CD4-positive, alpha-beta T cell (primary cell): ENCODE measurements at regions of chr17 and their contacts with region 1.

Region 1: GRCh38 chr17:56715613-56716357 is 117.9 kb downstream of the C17orf67 start:
- DNase-seq: peak; percentile 60 to 87 (median 66)
- ATAC-seq: peak; percentile 93
- H3K4me3 ChIP-seq: no peak overlapping the region
- H3K4me3 Mint-ChIP-seq: no peak overlapping the region
- H3K27ac ChIP-seq: no peak overlapping the region
- H3K27ac Mint-ChIP-seq: no peak overlapping the region
- H3K4me1 ChIP-seq: peaks cover 8% of the 10 kb centered on the region
- H3K4me1 Mint-ChIP-seq: peaks cover 8% of the 10 kb centered on the region
- H3K27me3 ChIP-seq: no peaks in the 10 kb centered on the region
- H3K27me3 Mint-ChIP-seq: no peaks in the 10 kb centered on the region
- CTCF ChIP-seq: peak; percentile 80

Region 2: GRCh38 chr17:55735731-55736405 is 979.9 kb before region 1 on chr17:
- CTCF ChIA-PET with region 1: no interaction called
- POLR2A ChIA-PET with region 1: no interaction called
- intact Hi-C with region 1: loop called in 1 of 2 experiments (anchors 10 kb)
- DNase-seq: peak in 8 of 14 experiments; percentile 4 to 62 (median 22)
- ATAC-seq: no peak
- H3K4me3 ChIP-seq: no peak overlapping the region
- H3K4me3 Mint-ChIP-seq: no peak overlapping the region
- H3K27ac ChIP-seq: no peak overlapping the region
- H3K27ac Mint-ChIP-seq: no peak overlapping the region
- H3K4me1 ChIP-seq: no peaks in the 10 kb centered on the region
- H3K4me1 Mint-ChIP-seq: no peaks in the 10 kb centered on the region
- H3K27me3 ChIP-seq: peaks cover 0 to 3% of the 10 kb centered on the region in 2 experiments
- H3K27me3 Mint-ChIP-seq: peaks cover 17% of the 10 kb centered on the region
- CTCF ChIP-seq: peak; percentile 76

Region 3: DNA sequence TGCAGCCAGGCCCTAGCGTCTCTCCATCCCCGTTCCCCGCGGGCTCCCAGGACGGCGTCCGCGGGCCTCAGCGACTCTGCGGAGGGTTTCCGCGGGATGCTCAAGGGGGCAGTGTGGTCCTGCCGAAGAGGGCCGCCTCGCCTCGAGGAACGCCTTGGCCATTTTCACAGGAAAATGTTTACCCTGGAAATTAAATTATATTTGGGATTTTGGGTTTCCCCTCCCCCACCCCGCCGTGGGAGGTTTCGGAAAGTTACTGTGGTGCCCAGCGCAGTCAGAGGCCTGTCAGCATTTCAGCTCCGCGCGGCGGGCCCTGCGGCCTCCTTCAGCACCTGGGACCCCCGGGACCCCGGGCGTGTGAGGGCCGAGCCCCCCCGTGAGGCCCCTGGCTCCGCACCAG is 870.4 kb before region 1 on chr17:
- CTCF ChIA-PET with region 1: no interaction called
- POLR2A ChIA-PET with region 1: no interaction called
- intact Hi-C with region 1: loop called in 1 of 2 experiments (anchors 5 kb)
- DNase-seq: peak in 4 of 14 experiments; percentile 4 to 17 (median 12)
- ATAC-seq: no peak
- H3K4me3 ChIP-seq: no peak overlapping the region
- H3K4me3 Mint-ChIP-seq: no peak overlapping the region
- H3K27ac ChIP-seq: no peak overlapping the region
- H3K27ac Mint-ChIP-seq: no peak overlapping the region
- H3K4me1 ChIP-seq: peaks cover 2% of the 10 kb centered on the region
- H3K4me1 Mint-ChIP-seq: no peaks in the 10 kb centered on the region
- H3K27me3 ChIP-seq: peaks cover 8 to 13% of the 10 kb centered on the region in 2 experiments
- H3K27me3 Mint-ChIP-seq: peaks cover 30% of the 10 kb centered on the region
- CTCF ChIP-seq: no peak

Region 4: GRCh38 chr17:56121440-56122028 is 594.3 kb before region 1 on chr17:
- CTCF ChIA-PET with region 1: no interaction called
- POLR2A ChIA-PET with region 1: no interaction called
- intact Hi-C with region 1: loop called in 1 of 2 experiments (anchors 5 kb)
- DNase-seq: no peak
- ATAC-seq: no peak
- H3K4me3 ChIP-seq: no peak overlapping the region
- H3K4me3 Mint-ChIP-seq: no peak overlapping the region
- H3K27ac ChIP-seq: no peak overlapping the region
- H3K27ac Mint-ChIP-seq: no peak overlapping the region
- H3K4me1 ChIP-seq: no peaks in the 10 kb centered on the region
- H3K4me1 Mint-ChIP-seq: no peaks in the 10 kb centered on the region
- H3K27me3 ChIP-seq: peaks cover 0 to 10% of the 10 kb centered on the region in 2 experiments
- H3K27me3 Mint-ChIP-seq: peaks cover 3% of the 10 kb centered on the region
- CTCF ChIP-seq: no peak

Region 5: GRCh38 chr17:56499799-56500388 is 215.9 kb before region 1 on chr17:
- CTCF ChIA-PET with region 1: interaction called, 4 read pairs
- POLR2A ChIA-PET with region 1: interaction called, 14 read pairs
- intact Hi-C with region 1: loop called (anchors 1 to 2 kb)
- DNase-seq: peak in 5 of 14 experiments; percentile 7 to 55 (median 37)
- ATAC-seq: no peak
- H3K4me3 ChIP-seq: no peak overlapping the region
- H3K4me3 Mint-ChIP-seq: no peak overlapping the region
- H3K27ac ChIP-seq: no peak overlapping the region
- H3K27ac Mint-ChIP-seq: no peak overlapping the region
- H3K4me1 ChIP-seq: no peaks in the 10 kb centered on the region
- H3K4me1 Mint-ChIP-seq: no peaks in the 10 kb centered on the region
- H3K27me3 ChIP-seq: no peaks in the 10 kb centered on the region
- H3K27me3 Mint-ChIP-seq: no peaks in the 10 kb centered on the region
- CTCF ChIP-seq: peak; percentile 42

Region 6: DNA sequence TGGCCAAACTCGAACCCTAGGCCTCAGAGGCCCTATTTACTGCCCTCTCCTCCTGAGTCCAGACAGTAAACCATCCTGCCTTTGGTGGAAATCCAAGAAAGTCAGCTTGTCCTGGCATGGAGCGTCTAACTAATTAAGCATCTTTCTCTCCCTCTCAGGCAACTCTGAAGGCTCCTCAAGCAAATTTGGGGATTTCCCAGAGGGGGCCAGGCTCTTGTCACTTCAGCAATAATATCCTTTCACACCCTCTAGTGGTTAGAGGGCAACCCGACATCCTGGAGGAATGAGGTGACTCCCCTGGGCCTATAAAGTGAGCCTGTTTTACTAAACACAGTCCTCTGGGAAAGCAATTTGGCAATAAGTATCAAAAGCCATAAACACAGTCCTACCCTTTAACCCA is 61.9 kb before region 1 on chr17:
- CTCF ChIA-PET with region 1: interaction called, 4 read pairs
- POLR2A ChIA-PET with region 1: no interaction called
- intact Hi-C with region 1: loop called (anchors 1 to 2 kb)
- DNase-seq: peak; percentile 45 to 86 (median 54)
- ATAC-seq: peak; percentile 100
- H3K4me3 ChIP-seq: no peak overlapping the region
- H3K4me3 Mint-ChIP-seq: no peak overlapping the region
- H3K27ac ChIP-seq: peak overlapping the region in 1 of 2 donors; percentile 31
- H3K27ac Mint-ChIP-seq: peak overlapping the region; percentile 10
- H3K4me1 ChIP-seq: peaks cover 5% of the 10 kb centered on the region
- H3K4me1 Mint-ChIP-seq: peaks cover 7% of the 10 kb centered on the region
- H3K27me3 ChIP-seq: no peaks in the 10 kb centered on the region
- H3K27me3 Mint-ChIP-seq: no peaks in the 10 kb centered on the region
- CTCF ChIP-seq: peak; percentile 62

Region 7: DNA sequence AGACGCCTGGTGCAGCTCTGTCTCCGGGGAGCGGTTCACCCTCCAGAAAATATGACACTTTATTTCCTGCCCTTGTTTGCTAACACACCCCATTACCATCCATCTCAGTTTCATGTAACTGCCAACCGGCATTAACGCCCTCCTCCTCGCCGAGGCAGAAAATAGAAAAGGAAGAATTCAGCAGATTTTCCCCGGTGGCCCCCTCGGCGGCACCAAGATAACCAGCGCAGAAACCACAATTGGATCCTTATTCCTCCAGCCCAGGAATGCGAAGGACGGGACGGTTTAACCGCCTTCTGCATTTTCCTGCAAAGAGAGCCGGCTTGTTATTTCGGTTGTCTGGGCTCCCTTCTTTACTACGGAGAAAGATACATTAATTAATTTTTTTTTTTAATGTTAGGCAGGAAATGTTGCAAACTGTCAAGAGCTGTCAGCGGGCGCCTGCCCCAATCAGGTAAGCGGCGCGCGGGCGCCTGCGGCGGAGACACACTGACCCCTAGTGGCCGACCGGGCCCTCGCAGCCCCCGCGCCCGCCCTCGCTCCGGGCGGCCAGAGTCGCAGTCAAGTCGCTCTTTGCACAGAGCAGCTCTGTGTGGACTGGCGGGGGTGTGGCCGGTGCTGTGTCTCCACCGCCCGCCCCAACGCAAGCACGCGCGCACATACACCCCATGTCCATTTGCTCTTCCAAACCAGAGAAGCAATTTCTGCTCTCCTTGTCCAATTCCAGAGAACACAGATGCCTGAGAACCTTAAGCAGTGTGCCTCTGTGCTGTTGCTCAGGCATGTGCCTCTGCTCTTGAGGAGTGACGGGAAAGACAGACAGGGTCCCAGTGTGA is 64.3 kb after region 1 on chr17:
- CTCF ChIA-PET with region 1: interaction called, 18 read pairs
- POLR2A ChIA-PET with region 1: interaction called, 18 read pairs
- intact Hi-C with region 1: loop called (anchors 1 to 2 kb)
- DNase-seq: peak; percentile 75 to 93 (median 85)
- ATAC-seq: peak; percentile 95
- H3K4me3 ChIP-seq: peak overlapping the region; percentile 64
- H3K4me3 Mint-ChIP-seq: peak overlapping the region; percentile 90
- H3K27ac ChIP-seq: peak overlapping the region; percentile 71 to 77
- H3K27ac Mint-ChIP-seq: peak overlapping the region; percentile 97
- H3K4me1 ChIP-seq: peaks cover 22% of the 10 kb centered on the region
- H3K4me1 Mint-ChIP-seq: peaks cover 26% of the 10 kb centered on the region
- H3K27me3 ChIP-seq: no peaks in the 10 kb centered on the region
- H3K27me3 Mint-ChIP-seq: no peaks in the 10 kb centered on the region
- CTCF ChIP-seq: peak; percentile 97

Region 8: GRCh38 chr17:56798908-56799307 is 83.1 kb after region 1 on chr17:
- CTCF ChIA-PET with region 1: no interaction called
- POLR2A ChIA-PET with region 1: no interaction called
- intact Hi-C with region 1: no loop called
- DNase-seq: no peak
- ATAC-seq: no peak
- H3K4me3 ChIP-seq: no peak overlapping the region
- H3K4me3 Mint-ChIP-seq: no peak overlapping the region
- H3K27ac ChIP-seq: no peak overlapping the region
- H3K27ac Mint-ChIP-seq: no peak overlapping the region
- H3K4me1 ChIP-seq: no peaks in the 10 kb centered on the region
- H3K4me1 Mint-ChIP-seq: no peaks in the 10 kb centered on the region
- H3K27me3 ChIP-seq: no peaks in the 10 kb centered on the region
- H3K27me3 Mint-ChIP-seq: no peaks in the 10 kb centered on the region
- CTCF ChIP-seq: no peak